MCF 10A (cell line): ENCODE measurements at regions of chr3 and their contacts with region 1.

Region 1: DNA sequence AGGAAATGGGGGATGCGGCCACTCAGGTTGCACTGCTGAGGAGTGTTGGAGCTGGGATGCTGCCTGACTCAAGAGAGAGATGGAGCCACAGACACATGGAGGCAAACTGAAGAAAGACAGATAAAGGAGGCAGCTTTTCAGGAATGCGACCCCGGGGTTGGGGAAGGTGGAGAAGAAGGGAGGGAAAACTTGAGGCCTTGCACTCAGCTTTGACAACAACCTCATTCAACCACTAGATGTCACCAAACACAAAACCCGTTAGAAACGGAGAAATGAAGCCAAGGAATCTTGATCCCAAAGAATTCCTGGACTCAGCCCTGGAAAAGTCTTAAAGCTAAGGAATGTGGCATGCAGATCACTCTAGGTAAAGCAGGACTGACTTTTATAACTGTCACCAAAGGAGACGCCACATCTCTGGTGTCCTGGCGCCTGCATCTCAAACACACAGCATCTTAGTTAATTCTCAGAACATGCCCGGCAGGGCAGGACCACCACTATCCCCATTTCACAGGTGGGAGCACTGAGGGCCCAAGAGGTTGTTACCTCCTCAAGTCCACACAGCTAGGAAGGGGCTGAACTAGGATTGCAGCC is 59.6 kb upstream of the LMCD1 start:
- DNase-seq: peak; percentile 69
- H3K4me3 Mint-ChIP-seq: no peak overlapping the region
- H3K27ac Mint-ChIP-seq: no peak overlapping the region
- H3K4me1 Mint-ChIP-seq: peaks cover 11% of the 10 kb centered on the region
- H3K27me3 Mint-ChIP-seq: no peaks in the 10 kb centered on the region
- CTCF ChIP-seq: peak; percentile 68

Region 2: DNA sequence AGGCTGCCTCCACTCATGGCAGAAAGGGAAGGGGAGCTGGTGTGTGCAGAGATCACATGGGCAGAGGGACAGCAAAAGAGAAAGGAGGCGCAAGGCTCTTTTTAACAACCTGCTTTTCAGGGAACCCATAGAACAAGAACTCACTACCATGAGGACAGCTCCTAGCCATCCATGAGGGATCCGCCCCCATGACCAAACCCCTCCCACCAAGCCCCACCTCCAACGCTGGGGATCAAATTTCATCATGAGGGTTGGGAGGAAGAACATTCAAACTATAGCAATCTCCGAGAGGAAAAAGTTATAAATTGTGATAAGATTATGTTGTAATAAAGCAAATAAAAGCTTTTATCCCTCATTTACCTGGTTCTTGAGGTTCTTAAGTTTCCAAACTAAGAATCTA is 25.1 kb before region 1 on chr3:
- CTCF ChIA-PET with region 1: no interaction called
- POLR2A ChIA-PET with region 1: no interaction called
- intact Hi-C with region 1: no loop called
- DNase-seq: peak; percentile 62
- H3K4me3 Mint-ChIP-seq: peak overlapping the region; percentile 47
- H3K27ac Mint-ChIP-seq: no peak overlapping the region
- H3K4me1 Mint-ChIP-seq: peaks cover 9% of the 10 kb centered on the region
- H3K27me3 Mint-ChIP-seq: peaks cover 6% of the 10 kb centered on the region
- CTCF ChIP-seq: no peak

Region 3: GRCh38 chr3:8458711-8459110 is 16.6 kb after region 1 on chr3:
- CTCF ChIA-PET with region 1: interaction called, 13 read pairs
- POLR2A ChIA-PET with region 1: interaction called, 3 read pairs
- intact Hi-C with region 1: no loop called
- DNase-seq: no peak
- H3K4me3 Mint-ChIP-seq: no peak overlapping the region
- H3K27ac Mint-ChIP-seq: no peak overlapping the region
- H3K4me1 Mint-ChIP-seq: peaks cover 8% of the 10 kb centered on the region
- H3K27me3 Mint-ChIP-seq: no peaks in the 10 kb centered on the region
- CTCF ChIP-seq: no peak

Region 4: DNA sequence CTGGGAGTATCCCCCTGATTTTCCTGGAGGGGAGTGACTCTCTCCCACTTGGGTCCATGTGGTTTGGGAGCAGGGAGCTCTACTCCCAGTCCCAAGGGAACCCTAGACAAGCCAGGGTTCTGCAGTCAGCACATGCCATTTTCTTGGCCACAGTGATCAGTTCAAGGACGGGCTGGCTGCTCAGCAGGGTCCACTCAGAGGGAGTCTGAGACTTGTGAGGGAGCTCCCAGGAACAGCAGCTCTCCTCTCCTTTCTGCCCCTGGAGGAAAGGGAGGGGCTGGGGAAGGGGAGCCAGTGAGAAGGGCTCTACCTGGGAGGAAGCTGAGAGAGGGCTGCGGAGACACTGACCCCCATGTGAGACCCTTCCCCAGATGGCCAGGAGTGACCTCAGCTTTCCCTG is 30.5 kb after region 1 on chr3:
- CTCF ChIA-PET with region 1: interaction called, 12 read pairs
- POLR2A ChIA-PET with region 1: no interaction called
- intact Hi-C with region 1: no loop called
- DNase-seq: no peak
- H3K4me3 Mint-ChIP-seq: no peak overlapping the region
- H3K27ac Mint-ChIP-seq: no peak overlapping the region
- H3K4me1 Mint-ChIP-seq: peaks cover 5% of the 10 kb centered on the region
- H3K27me3 Mint-ChIP-seq: no peaks in the 10 kb centered on the region
- CTCF ChIP-seq: no peak

Region 5: DNA sequence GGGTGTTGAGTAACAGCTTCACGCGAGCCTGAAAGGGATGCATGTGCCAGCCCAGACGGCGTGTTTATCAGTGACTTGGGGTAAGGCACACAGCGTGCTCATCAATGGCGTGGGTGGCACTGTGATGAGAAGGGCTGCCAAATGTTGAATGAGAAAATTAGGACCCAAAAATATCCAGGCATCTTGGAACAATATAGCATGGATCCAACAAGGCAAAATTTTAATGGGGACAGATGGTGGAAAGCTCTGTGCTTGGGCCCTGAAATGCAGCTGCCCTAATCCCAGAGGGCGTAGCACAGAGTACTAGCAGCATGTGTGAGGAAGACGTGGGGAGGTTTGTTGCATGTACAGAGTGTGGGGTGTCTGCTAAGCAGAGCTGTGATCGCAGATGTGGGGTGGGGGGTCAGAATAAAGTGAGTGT is 153.6 kb after region 1 on chr3:
- CTCF ChIA-PET with region 1: interaction called, 13 read pairs
- POLR2A ChIA-PET with region 1: no interaction called
- intact Hi-C with region 1: no loop called
- DNase-seq: no peak
- H3K4me3 Mint-ChIP-seq: no peak overlapping the region
- H3K27ac Mint-ChIP-seq: no peak overlapping the region
- H3K4me1 Mint-ChIP-seq: peaks cover 9% of the 10 kb centered on the region
- H3K27me3 Mint-ChIP-seq: no peaks in the 10 kb centered on the region
- CTCF ChIP-seq: no peak

Region 6: GRCh38 chr3:8607234-8608040 is 165.4 kb after region 1 on chr3:
- CTCF ChIA-PET with region 1: interaction called, 72 read pairs
- POLR2A ChIA-PET with region 1: no interaction called
- intact Hi-C with region 1: loop called (anchors 1 kb)
- DNase-seq: peak; percentile 61
- H3K4me3 Mint-ChIP-seq: no peak overlapping the region
- H3K27ac Mint-ChIP-seq: no peak overlapping the region
- H3K4me1 Mint-ChIP-seq: peaks cover 21% of the 10 kb centered on the region
- H3K27me3 Mint-ChIP-seq: no peaks in the 10 kb centered on the region
- CTCF ChIP-seq: peak; percentile 73

Region 7: DNA sequence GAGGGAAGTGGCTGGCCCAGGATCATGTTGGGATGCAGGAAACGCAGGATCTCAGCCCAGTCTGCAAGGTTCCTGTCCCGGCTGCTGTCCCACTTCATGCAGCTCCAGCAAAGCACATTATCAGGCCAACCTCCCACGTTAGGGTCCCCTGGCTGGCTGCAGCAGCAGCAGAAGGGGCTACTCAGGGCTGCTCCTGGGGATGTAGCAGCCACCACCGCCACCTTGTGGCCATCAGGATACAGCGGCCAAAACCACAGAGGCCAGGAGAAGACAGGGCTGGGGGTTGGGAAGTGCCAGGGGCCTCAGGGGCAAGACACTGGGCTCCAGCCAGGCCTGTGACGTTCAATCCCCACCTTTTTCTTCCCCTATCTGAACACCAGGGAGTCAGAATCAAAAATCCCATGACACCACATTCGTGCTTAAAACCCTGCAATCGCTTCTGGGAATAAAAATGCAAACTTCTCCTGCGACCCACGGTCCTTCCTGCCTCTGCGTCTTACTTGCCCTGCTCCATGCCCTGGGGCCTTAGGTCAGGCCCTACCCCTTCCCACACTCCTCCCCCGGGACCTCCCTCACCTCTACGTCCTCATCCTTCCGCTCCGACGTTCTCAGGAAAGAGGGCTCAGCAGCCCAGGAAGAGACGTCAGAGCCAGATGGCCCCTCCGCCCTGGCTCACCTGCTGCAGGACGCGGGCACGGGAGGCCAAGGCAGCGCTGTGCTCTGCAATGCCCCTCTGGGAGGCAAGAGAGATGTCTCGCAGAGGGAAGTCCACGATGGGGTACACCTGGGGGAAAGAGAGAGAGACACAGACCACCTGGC is 181.0 kb after region 1 on chr3:
- CTCF ChIA-PET with region 1: interaction called, 79 read pairs
- POLR2A ChIA-PET with region 1: interaction called, 3 read pairs
- intact Hi-C with region 1: loop called (anchors 1 kb)
- DNase-seq: peak; percentile 68
- H3K4me3 Mint-ChIP-seq: no peak overlapping the region
- H3K27ac Mint-ChIP-seq: no peak overlapping the region
- H3K4me1 Mint-ChIP-seq: peaks cover 11% of the 10 kb centered on the region
- H3K27me3 Mint-ChIP-seq: no peaks in the 10 kb centered on the region
- CTCF ChIP-seq: peak; percentile 93

Region 8: DNA sequence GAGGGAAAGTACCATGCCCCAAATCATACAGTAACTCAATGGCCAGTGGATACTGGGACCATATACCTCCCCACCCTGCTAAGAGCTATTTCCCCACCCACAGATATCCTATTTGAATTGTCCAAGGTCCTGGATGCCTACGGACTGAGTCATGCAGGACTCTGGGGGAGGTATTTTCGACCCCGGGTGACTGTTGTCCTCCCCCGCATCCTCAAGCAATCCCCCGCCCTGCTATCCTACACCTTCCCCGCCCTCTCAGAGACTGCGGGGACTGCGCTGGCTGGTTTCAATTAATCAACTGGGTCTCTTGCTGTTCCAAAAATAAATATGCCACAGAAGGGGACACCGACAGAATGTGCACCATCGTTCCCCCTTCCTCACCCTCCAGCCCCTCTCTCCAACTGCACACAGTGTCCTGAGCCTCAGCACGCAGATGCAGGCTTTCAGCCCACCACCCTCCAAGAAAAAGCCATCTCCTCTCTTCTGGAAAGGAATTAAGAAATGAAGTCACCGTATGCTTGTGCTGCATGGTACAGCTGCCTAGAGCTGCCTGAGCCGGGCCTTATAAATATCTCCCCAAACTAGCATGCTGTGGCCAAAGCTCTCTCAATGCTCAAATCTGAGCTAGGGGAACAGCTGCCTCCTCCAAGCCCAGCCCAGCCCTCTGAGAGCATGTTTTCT is 299.7 kb after region 1 on chr3:
- CTCF ChIA-PET with region 1: interaction called, 3 read pairs
- POLR2A ChIA-PET with region 1: no interaction called
- intact Hi-C with region 1: loop called (anchors 10 kb)
- DNase-seq: peak; percentile 77
- H3K4me3 Mint-ChIP-seq: no peak overlapping the region
- H3K27ac Mint-ChIP-seq: peak overlapping the region; percentile 36
- H3K4me1 Mint-ChIP-seq: peaks cover 51% of the 10 kb centered on the region
- H3K27me3 Mint-ChIP-seq: no peaks in the 10 kb centered on the region
- CTCF ChIP-seq: no peak